ENCODE measurements at regions of chr19 and their contacts with region 1.

Region 1: GRCh38 chr19:48363810-48364563 is at the starts of genes SYNGR4 and TMEM143:
- DNase-seq: peak; percentile 91 to 100 (median 99)
- ATAC-seq: peak; percentile 96
- H3K4me3 ChIP-seq: peak within 1 kb of the TSS; percentile 87
- H3K4me3 Mint-ChIP-seq: peak within 1 kb of the TSS; percentile 80 to 97 (median 92)
- H3K27ac ChIP-seq: peak within 1 kb of the TSS; percentile 86
- H3K27ac Mint-ChIP-seq: peak within 1 kb of the TSS; percentile 89 to 98 (median 95)
- H3K4me1 ChIP-seq: peaks cover 9 to 13% of the 10 kb centered on the region in 2 donors
- H3K4me1 Mint-ChIP-seq: peaks cover 0 to 28% (median 6%) of the 10 kb centered on the region in 7 donors
- H3K27me3 ChIP-seq: no peaks in the 10 kb centered on the region
- H3K27me3 Mint-ChIP-seq: peaks cover 0 to 3% (median 0%) of the 10 kb centered on the region in 5 donors
- total RNA-seq, gene SYNGR4: not detected
- total RNA-seq, gene TMEM143: 11.6 to 39.8 (median 20.1) TPM

Region 2: DNA sequence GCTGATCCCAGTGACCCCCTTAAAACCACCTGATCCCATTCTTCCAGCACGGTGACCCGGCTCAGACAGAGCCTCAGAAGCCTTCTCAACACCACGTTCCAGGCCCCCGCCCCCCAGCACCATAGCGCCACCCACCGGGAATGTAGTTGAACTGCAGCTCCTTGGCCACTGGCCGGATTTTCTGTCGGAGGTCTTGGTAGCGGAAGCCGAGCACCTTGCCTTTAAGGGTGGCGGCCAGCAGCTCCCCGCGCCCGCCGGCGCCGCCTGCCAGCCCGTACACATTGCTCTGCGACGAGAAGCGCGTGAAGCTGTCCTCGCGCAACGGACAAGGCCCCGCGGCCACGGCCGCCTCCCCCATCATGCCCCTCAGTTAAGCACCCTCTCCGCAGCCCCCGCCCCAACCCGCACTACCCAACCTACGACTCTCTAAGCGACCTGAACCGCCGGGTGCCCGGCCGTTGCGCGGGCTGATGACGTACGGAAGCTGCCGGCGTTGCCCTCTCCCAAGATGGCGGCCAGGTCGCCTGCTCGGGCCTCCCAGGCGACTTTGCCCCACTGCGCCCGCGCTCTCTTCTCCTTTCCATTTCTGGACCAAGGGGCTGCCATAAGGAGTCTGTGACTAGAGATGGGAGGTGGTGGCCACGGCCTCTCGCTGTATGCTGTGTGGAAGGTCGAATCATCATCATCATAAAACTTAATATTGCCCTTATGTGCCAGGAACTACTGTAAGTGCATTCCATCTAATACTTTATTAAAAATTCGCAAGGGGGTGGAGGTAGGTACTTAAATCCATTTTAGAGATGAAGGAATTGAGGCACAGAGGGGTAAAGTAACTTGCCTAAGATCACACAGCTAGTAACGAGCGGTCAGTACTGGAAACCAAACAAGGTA is 879.9 kb before region 1 on chr19 and contains the start of gene KPTN:
- CTCF ChIA-PET with region 1: no interaction called
- POLR2A ChIA-PET with region 1: no interaction called
- intact Hi-C with region 1: loop called in 1 of 2 experiments (anchors 5 kb)
- DNase-seq: peak; percentile 85 to 92 (median 88)
- ATAC-seq: peak; percentile 91
- H3K4me3 ChIP-seq: peak within 1 kb of the TSS; percentile 74
- H3K4me3 Mint-ChIP-seq: peak within 1 kb of the TSS; percentile 83 to 99 (median 96)
- H3K27ac ChIP-seq: peak within 1 kb of the TSS; percentile 96
- H3K27ac Mint-ChIP-seq: peak within 1 kb of the TSS; percentile 94 to 99 (median 97)
- H3K4me1 ChIP-seq: peaks cover 18% of the 10 kb centered on the region in 2 donors
- H3K4me1 Mint-ChIP-seq: peaks cover 22 to 39% (median 30%) of the 10 kb centered on the region in 7 donors
- H3K27me3 ChIP-seq: no peaks in the 10 kb centered on the region
- H3K27me3 Mint-ChIP-seq: peaks cover 0 to 4% (median 0%) of the 10 kb centered on the region in 5 donors
- total RNA-seq, gene KPTN: 5.1 to 9.2 (median 6.7) TPM

Region 3: GRCh38 chr19:48255376-48256303 is 108.3 kb before region 1 on chr19 and contains the start of gene CARD8:
- CTCF ChIA-PET with region 1: interaction called, 4 read pairs
- POLR2A ChIA-PET with region 1: no interaction called
- intact Hi-C with region 1: loop called in 1 of 2 experiments (anchors 1 kb)
- DNase-seq: peak; percentile 54 to 91 (median 84)
- ATAC-seq: peak; percentile 85
- H3K4me3 ChIP-seq: peak within 1 kb of the TSS; percentile 100
- H3K4me3 Mint-ChIP-seq: peak within 1 kb of the TSS; percentile 74 to 100 (median 99)
- H3K27ac ChIP-seq: peak within 1 kb of the TSS; percentile 88
- H3K27ac Mint-ChIP-seq: peak within 1 kb of the TSS; percentile 90 to 100 (median 97)
- H3K4me1 ChIP-seq: peaks cover 53 to 56% of the 10 kb centered on the region in 2 donors
- H3K4me1 Mint-ChIP-seq: peaks cover 51 to 86% (median 76%) of the 10 kb centered on the region in 7 donors
- H3K27me3 ChIP-seq: no peaks in the 10 kb centered on the region
- H3K27me3 Mint-ChIP-seq: no peaks in the 10 kb centered on the region
- total RNA-seq, gene CARD8: 104 to 301 (median 182) TPM

Region 4: DNA sequence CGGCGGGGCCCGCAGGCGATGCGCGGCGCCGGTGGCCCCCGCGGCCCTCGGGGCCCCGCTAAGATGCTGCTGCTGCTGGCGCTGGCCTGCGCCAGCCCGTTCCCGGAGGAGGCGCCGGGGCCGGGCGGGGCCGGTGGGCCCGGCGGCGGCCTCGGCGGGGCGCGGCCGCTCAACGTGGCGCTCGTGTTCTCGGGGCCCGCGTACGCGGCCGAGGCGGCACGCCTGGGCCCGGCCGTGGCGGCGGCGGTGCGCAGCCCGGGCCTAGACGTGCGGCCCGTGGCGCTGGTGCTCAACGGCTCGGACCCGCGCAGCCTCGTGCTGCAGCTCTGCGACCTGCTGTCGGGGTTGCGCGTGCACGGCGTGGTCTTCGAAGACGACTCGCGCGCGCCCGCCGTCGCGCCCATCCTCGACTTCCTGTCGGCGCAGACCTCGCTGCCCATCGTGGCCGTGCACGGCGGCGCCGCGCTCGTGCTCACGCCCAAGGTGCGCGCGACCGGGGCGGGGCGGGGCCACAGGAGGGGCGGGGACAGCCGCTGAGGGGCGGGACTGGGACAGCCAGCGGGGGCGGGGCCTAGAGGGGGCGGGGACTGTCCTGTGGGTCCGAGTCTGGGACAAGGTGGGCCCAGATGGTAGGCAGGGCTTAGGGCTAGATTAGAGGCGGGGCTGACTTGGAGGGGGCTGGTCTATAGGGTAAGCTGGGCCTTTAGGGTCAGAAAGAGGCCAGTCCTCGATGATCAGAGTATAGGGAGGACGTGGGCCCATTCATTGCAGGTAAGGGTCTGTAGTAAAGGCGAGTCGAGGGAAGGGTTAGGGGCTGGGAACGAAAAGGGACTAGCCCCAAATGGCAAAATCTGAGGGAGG is 34.6 kb after region 1 on chr19:
- CTCF ChIA-PET with region 1: no interaction called
- POLR2A ChIA-PET with region 1: interaction called, 7 read pairs
- intact Hi-C with region 1: loop called (anchors 1 to 2 kb)
- DNase-seq: peak; percentile 77 to 88 (median 86)
- ATAC-seq: peak; percentile 90
- H3K4me3 ChIP-seq: peak overlapping the region; percentile 63
- H3K4me3 Mint-ChIP-seq: peak overlapping the region; percentile 54 to 96 (median 79)
- H3K27ac ChIP-seq: peak overlapping the region; percentile 59
- H3K27ac Mint-ChIP-seq: peak overlapping the region; percentile 22 to 97 (median 85)
- H3K4me1 ChIP-seq: peaks cover 17 to 29% of the 10 kb centered on the region in 2 donors
- H3K4me1 Mint-ChIP-seq: peaks cover 18 to 51% (median 41%) of the 10 kb centered on the region in 7 donors
- H3K27me3 ChIP-seq: peaks cover 9 to 21% of the 10 kb centered on the region in 2 donors
- H3K27me3 Mint-ChIP-seq: peaks cover 15 to 43% (median 31%) of the 10 kb centered on the region in 5 donors

Region 5: GRCh38 chr19:48445606-48446481 is 81.9 kb after region 1 on chr19 and contains the start of gene GRWD1:
- CTCF ChIA-PET with region 1: no interaction called
- POLR2A ChIA-PET with region 1: interaction called, 3 read pairs
- intact Hi-C with region 1: loop called (anchors 1 kb)
- DNase-seq: peak; percentile 63 to 98 (median 93)
- ATAC-seq: peak; percentile 95
- H3K4me3 ChIP-seq: peak within 1 kb of the TSS; percentile 80
- H3K4me3 Mint-ChIP-seq: peak within 1 kb of the TSS; percentile 87 to 96 (median 93)
- H3K27ac ChIP-seq: peak within 1 kb of the TSS; percentile 83
- H3K27ac Mint-ChIP-seq: peak within 1 kb of the TSS; percentile 90 to 98 (median 95)
- H3K4me1 ChIP-seq: peaks cover 20 to 22% of the 10 kb centered on the region in 2 donors
- H3K4me1 Mint-ChIP-seq: peaks cover 19 to 44% (median 37%) of the 10 kb centered on the region in 7 donors
- H3K27me3 ChIP-seq: peaks cover 0 to 8% of the 10 kb centered on the region in 2 donors
- H3K27me3 Mint-ChIP-seq: peaks cover 12 to 33% (median 21%) of the 10 kb centered on the region in 5 donors
- total RNA-seq, gene GRWD1: 26.1 to 45.8 (median 36.3) TPM

Region 6: DNA sequence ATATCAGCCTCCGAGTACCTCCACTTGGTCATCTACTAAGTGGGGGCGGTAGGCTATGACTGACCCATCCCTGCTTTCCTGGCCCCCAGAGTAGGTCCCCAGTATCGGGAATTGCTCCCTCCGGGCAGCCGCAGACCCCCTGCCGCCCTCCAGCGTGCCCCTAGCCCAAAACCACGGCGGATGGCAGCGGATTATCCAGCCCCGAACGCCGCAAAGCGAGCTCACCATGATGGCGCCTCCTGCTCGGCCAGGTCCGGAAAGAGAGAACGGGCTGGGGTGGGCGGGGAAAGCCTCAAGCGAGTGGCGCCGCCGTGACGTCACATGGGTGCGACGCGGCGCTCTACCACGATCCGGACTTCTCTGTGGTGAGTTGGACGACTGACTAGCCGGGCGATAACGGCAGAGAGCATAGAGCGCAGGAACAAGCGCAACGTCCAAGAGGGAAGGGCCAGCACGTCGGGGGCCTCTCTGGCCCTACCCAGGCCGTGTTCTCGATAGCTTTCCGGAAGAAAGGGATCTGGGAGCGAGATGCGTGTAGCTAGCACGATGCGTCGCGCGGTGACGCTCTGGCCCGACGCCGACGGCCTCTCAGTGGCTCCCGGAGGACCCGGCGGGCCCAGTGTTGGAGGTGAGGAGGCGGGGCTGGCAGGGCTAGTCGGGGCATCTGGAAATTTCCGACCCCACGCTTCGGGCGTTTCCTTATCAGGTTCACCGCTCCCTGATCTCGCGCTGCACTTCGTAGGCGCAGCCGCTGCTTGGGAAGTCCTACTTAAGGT is 255.1 kb after region 1 on chr19 and contains the starts of genes RPL18 and SPHK2:
- CTCF ChIA-PET with region 1: no interaction called
- POLR2A ChIA-PET with region 1: interaction called, 9 read pairs
- intact Hi-C with region 1: loop called (anchors 1 to 2 kb)
- DNase-seq: peak; percentile 89 to 97 (median 95)
- ATAC-seq: peak; percentile 89
- H3K4me3 ChIP-seq: peak within 1 kb of the TSS; percentile 96
- H3K4me3 Mint-ChIP-seq: peak within 1 kb of the TSS; percentile 88 to 99 (median 96)
- H3K27ac ChIP-seq: peak within 1 kb of the TSS; percentile 95
- H3K27ac Mint-ChIP-seq: peak within 1 kb of the TSS; percentile 96 to 99 (median 98)
- H3K4me1 ChIP-seq: peaks cover 26 to 45% of the 10 kb centered on the region in 2 donors
- H3K4me1 Mint-ChIP-seq: peaks cover 40 to 64% (median 54%) of the 10 kb centered on the region in 7 donors
- H3K27me3 ChIP-seq: no peaks in the 10 kb centered on the region
- H3K27me3 Mint-ChIP-seq: no peaks in the 10 kb centered on the region
- total RNA-seq, gene RPL18: 1,570 to 2,826 (median 2,745) TPM
- total RNA-seq, gene SPHK2: 20.1 to 34.7 (median 30.5) TPM

Region 7: GRCh38 chr19:49473868-49474544 is 1110.0 kb after region 1 on chr19 and contains the start of gene FLT3LG:
- CTCF ChIA-PET with region 1: no interaction called
- POLR2A ChIA-PET with region 1: no interaction called
- intact Hi-C with region 1: no loop called
- DNase-seq: peak; percentile 91 to 98 (median 96)
- ATAC-seq: peak; percentile 72
- H3K4me3 ChIP-seq: peak within 1 kb of the TSS; percentile 87
- H3K4me3 Mint-ChIP-seq: peak within 1 kb of the TSS; percentile 91 to 100 (median 96)
- H3K27ac ChIP-seq: peak within 1 kb of the TSS; percentile 99
- H3K27ac Mint-ChIP-seq: peak within 1 kb of the TSS; percentile 95 to 100 (median 98)
- H3K4me1 ChIP-seq: peaks cover 50 to 52% of the 10 kb centered on the region in 2 donors
- H3K4me1 Mint-ChIP-seq: peaks cover 18 to 62% (median 51%) of the 10 kb centered on the region in 7 donors
- H3K27me3 ChIP-seq: no peaks in the 10 kb centered on the region
- H3K27me3 Mint-ChIP-seq: no peaks in the 10 kb centered on the region
- total RNA-seq, gene FLT3LG: 90.6 to 401 (median 280) TPM